Mammary epithelial cell (primary cell): ENCODE measurements at regions of chr5 and their contacts with region 1.

Region 1: GRCh38 chr5:131263648-131264450 is at the start of gene CDC42SE2:
- DNase-seq: peak; percentile 88
- H3K4me3 ChIP-seq: peak within 1 kb of the TSS; percentile 93 to 99 (median 99)
- H3K27ac ChIP-seq: peak within 1 kb of the TSS; percentile 77
- H3K4me1 ChIP-seq: peaks cover 32% of the 10 kb centered on the region
- H3K27me3 ChIP-seq: no peaks in the 10 kb centered on the region
- CTCF ChIP-seq: no peak
- total RNA-seq, gene CDC42SE2: 26.0 to 87.4 TPM

Region 2: DNA sequence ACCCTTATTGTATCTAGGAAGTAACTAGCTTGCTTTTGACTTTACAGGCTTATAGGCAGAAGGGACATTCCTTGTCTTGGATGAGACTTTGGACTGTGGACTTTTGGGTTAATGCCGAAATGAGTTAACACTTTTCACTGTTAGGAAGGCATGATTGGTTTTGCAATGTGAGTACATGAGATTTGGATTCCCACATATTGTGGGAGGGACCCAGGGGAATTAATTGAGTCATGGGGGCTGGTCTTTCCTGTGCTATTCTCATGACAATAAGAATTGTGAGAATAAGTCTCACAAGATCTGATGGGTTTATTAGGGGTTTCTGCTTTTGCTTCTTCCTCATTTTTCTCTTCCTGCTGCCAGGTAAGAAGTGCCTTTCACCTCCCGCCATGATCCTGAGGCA is 516.3 kb before region 1 on chr5:
- CTCF ChIA-PET with region 1: no interaction called
- dilution Hi-C with region 1: no loop called
- in situ Hi-C with region 1: no loop called
- intact Hi-C with region 1: no loop called
- DNase-seq: no peak
- H3K4me3 ChIP-seq: no peak overlapping the region
- H3K27ac ChIP-seq: no peak overlapping the region
- H3K4me1 ChIP-seq: no peaks in the 10 kb centered on the region
- H3K27me3 ChIP-seq: no peaks in the 10 kb centered on the region
- CTCF ChIP-seq: no peak

Region 3: GRCh38 chr5:131165119-131165727 is 98.6 kb before region 1 on chr5 and contains the start of gene HINT1:
- CTCF ChIA-PET with region 1: no interaction called
- dilution Hi-C with region 1: no loop called
- in situ Hi-C with region 1: no loop called
- intact Hi-C with region 1: loop called (anchors 1 kb)
- DNase-seq: peak; percentile 92
- H3K4me3 ChIP-seq: peak within 1 kb of the TSS; percentile 88 to 93 (median 89)
- H3K27ac ChIP-seq: peak within 1 kb of the TSS; percentile 96
- H3K4me1 ChIP-seq: peaks cover 9% of the 10 kb centered on the region
- H3K27me3 ChIP-seq: no peaks in the 10 kb centered on the region
- CTCF ChIP-seq: peak in 1 of 2 donors; percentile 45
- total RNA-seq, gene HINT1: 167 to 273 TPM

Region 4: DNA sequence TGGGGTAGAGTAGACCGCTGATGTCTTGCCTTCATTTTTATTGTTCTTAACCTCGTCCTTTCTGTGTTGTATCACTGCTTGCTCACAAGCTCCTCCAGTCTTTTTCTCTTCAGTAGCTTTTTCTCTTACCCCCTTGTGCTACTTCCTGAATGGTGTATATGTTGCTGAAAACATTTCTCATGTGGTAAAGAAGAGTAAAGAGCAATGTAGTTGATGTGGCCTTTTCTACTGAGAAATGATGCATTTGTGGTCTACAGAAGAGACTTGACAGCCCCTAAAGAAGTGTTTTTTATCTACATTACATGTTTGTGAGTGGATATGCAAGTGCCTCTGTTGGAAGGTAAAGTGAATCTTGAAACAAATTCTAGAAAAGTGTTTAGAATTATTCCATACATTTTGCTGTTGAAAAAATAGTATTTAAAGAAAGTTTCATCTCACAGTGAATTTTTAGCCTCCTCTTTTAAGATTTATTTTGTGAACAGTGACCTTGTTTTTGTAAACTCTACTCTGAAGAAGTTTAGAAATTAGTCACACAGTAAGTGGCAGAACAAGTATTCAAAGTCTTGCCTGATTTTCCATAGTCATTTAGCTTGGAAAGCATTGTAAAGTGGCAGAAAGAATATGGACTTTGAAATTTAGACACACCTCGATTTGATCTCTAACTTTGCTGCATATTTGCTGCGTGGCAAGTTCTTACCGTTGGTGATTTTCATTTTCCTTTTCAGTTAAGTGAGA is 17.5 kb after region 1 on chr5:
- CTCF ChIA-PET with region 1: no interaction called
- dilution Hi-C with region 1: no loop called
- in situ Hi-C with region 1: no loop called
- intact Hi-C with region 1: loop called (anchors 2 kb)
- DNase-seq: no peak
- H3K4me3 ChIP-seq: peak overlapping the region; percentile 5 to 31 (median 26)
- H3K27ac ChIP-seq: peak overlapping the region; percentile 76
- H3K4me1 ChIP-seq: peaks cover 22% of the 10 kb centered on the region
- H3K27me3 ChIP-seq: no peaks in the 10 kb centered on the region
- CTCF ChIP-seq: no peak

Region 5: DNA sequence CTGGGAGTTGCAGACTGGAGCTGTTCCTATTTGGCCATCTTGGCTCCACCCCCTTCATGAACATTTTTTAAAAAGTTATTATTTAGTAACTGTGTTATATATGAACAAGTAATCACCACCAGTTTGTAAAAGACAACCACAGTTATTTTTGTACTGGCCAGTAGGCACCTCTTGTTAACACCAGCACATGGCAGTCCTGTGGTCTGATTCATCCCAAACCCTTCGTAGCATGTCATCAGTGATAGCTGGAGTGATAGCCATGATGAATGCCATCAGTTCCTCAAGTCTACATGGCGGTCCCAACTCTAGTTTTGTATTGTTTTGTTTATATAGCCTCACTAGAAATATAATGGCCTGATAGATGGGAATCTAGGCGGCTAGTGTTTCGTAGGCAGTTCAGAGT is 74.2 kb after region 1 on chr5:
- CTCF ChIA-PET with region 1: no interaction called
- dilution Hi-C with region 1: loop called (anchors 5 kb)
- in situ Hi-C with region 1: no loop called
- intact Hi-C with region 1: no loop called
- DNase-seq: no peak
- H3K4me3 ChIP-seq: no peak overlapping the region
- H3K27ac ChIP-seq: no peak overlapping the region
- H3K4me1 ChIP-seq: no peaks in the 10 kb centered on the region
- H3K27me3 ChIP-seq: no peaks in the 10 kb centered on the region
- CTCF ChIP-seq: no peak

Region 6: GRCh38 chr5:131423056-131423455 is 159.2 kb after region 1 on chr5:
- CTCF ChIA-PET with region 1: no interaction called
- dilution Hi-C with region 1: no loop called
- in situ Hi-C with region 1: no loop called
- intact Hi-C with region 1: no loop called
- DNase-seq: no peak
- H3K4me3 ChIP-seq: no peak overlapping the region
- H3K27ac ChIP-seq: no peak overlapping the region
- H3K4me1 ChIP-seq: no peaks in the 10 kb centered on the region
- H3K27me3 ChIP-seq: no peaks in the 10 kb centered on the region
- CTCF ChIP-seq: peak; percentile 26 to 33

Region 7: DNA sequence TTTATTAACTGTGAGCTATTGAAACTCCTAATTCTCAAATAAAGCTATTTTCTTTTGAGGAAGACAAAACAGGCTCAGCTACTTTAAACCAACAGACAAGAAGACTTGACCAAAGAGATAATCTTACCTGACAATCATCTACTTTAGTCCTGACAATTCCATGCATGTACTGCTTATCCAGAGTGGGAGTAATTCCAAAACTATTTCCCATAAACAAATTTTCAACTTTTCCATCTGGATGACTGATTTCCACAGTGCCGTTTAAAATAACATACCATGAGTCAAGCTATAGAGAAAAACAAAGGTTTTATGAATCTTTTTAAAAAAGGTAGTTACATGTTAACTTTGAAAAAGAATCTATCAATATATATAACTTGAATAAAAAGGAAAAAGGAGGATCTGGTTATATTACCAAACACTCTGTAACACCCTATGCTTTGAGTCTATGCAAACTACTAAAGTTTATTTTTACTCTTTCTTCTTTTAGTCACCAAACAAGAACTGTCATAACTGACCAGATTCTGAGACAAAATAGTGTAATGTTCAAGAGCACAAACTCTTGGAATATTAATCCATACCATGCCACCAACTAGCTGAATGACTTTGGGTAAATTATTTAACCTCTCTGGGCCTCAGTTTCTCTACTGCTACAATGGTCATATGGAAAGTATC is 241.5 kb after region 1 on chr5:
- CTCF ChIA-PET with region 1: interaction called, 10 read pairs
- dilution Hi-C with region 1: no loop called
- in situ Hi-C with region 1: no loop called
- intact Hi-C with region 1: no loop called
- DNase-seq: no peak
- H3K4me3 ChIP-seq: no peak overlapping the region
- H3K27ac ChIP-seq: no peak overlapping the region
- H3K4me1 ChIP-seq: no peaks in the 10 kb centered on the region
- H3K27me3 ChIP-seq: no peaks in the 10 kb centered on the region
- CTCF ChIP-seq: no peak